ENCODE measurements at regions of chr11 and their contacts with region 1.

Region 1: GRCh38 chr11:7904914-7905313 is 26.2 kb downstream of the OR10A6 start:
- DNase-seq: peak; percentile 47
- H3K4me3 ChIP-seq: peak overlapping the region; percentile 31 to 58 (median 51)
- H3K27ac ChIP-seq: peak overlapping the region; percentile 40
- H3K4me1 ChIP-seq: peaks cover 38% of the 10 kb centered on the region
- H3K27me3 ChIP-seq: no peaks in the 10 kb centered on the region
- CTCF ChIP-seq: peak; percentile 47 to 59

Region 2: GRCh38 chr11:7936615-7937014 is 31.7 kb after region 1 on chr11:
- CTCF ChIA-PET with region 1: no interaction called
- dilution Hi-C with region 1: no loop called
- in situ Hi-C with region 1: no loop called
- intact Hi-C with region 1: no loop called
- DNase-seq: peak; percentile 70
- H3K4me3 ChIP-seq: no peak overlapping the region
- H3K27ac ChIP-seq: no peak overlapping the region
- H3K4me1 ChIP-seq: peaks cover 5% of the 10 kb centered on the region
- H3K27me3 ChIP-seq: no peaks in the 10 kb centered on the region
- CTCF ChIP-seq: no peak

Region 3: GRCh38 chr11:7965386-7965785 is 60.5 kb after region 1 on chr11 and contains the start of gene NLRP10:
- CTCF ChIA-PET with region 1: interaction called, 4 read pairs
- dilution Hi-C with region 1: loop called (anchors 5 kb)
- in situ Hi-C with region 1: no loop called
- intact Hi-C with region 1: loop called (anchors 1 kb)
- DNase-seq: peak; percentile 91
- H3K4me3 ChIP-seq: peak within 1 kb of the TSS in 1 of 3 experiments; percentile 19
- H3K27ac ChIP-seq: peak within 1 kb of the TSS; percentile 93
- H3K4me1 ChIP-seq: peaks cover 49% of the 10 kb centered on the region
- H3K27me3 ChIP-seq: no peaks in the 10 kb centered on the region
- CTCF ChIP-seq: no peak
- total RNA-seq, gene NLRP10: 9.2 to 18.0 TPM

Region 4: GRCh38 chr11:7986768-7987559 is 82.0 kb after region 1 on chr11 and contains the start of gene EIF3F:
- CTCF ChIA-PET with region 1: interaction called, 57 read pairs
- dilution Hi-C with region 1: no loop called
- in situ Hi-C with region 1: loop called (anchors 5 kb)
- intact Hi-C with region 1: loop called (anchors 1 kb)
- DNase-seq: peak; percentile 98
- H3K4me3 ChIP-seq: peak within 1 kb of the TSS; percentile 68 to 98 (median 79)
- H3K27ac ChIP-seq: peak within 1 kb of the TSS; percentile 84
- H3K4me1 ChIP-seq: peaks cover 31% of the 10 kb centered on the region
- H3K27me3 ChIP-seq: no peaks in the 10 kb centered on the region
- CTCF ChIP-seq: peak; percentile 84 to 86
- total RNA-seq, gene EIF3F: 234 to 399 TPM